ENCODE measurements at regions of chr7 and their contacts with region 1.

Region 1: GRCh38 chr7:4681886-4682620 is at the start of gene FOXK1:
- DNase-seq: peak; percentile 78
- ATAC-seq: peak; percentile 81
- H3K4me3 Mint-ChIP-seq: peak within 1 kb of the TSS; percentile 97
- H3K27ac Mint-ChIP-seq: peak within 1 kb of the TSS; percentile 99
- H3K4me1 Mint-ChIP-seq: peaks cover 23% of the 10 kb centered on the region
- H3K27me3 Mint-ChIP-seq: no peaks in the 10 kb centered on the region
- total RNA-seq, gene FOXK1: 27.1 to 31.2 TPM

Region 2: GRCh38 chr7:4641667-4642467 is 40.2 kb before region 1 on chr7:
- CTCF ChIA-PET with region 1: interaction called, 20 read pairs
- DNase-seq: peak; percentile 96
- ATAC-seq: peak; percentile 89
- H3K4me3 Mint-ChIP-seq: peak overlapping the region; percentile 87
- H3K27ac Mint-ChIP-seq: peak overlapping the region; percentile 93
- H3K4me1 Mint-ChIP-seq: peaks cover 20% of the 10 kb centered on the region
- H3K27me3 Mint-ChIP-seq: no peaks in the 10 kb centered on the region